Transverse colon (tissue), 4 donors: ENCODE measurements at regions of chr16 and their contacts with region 1.

Region 1: DNA sequence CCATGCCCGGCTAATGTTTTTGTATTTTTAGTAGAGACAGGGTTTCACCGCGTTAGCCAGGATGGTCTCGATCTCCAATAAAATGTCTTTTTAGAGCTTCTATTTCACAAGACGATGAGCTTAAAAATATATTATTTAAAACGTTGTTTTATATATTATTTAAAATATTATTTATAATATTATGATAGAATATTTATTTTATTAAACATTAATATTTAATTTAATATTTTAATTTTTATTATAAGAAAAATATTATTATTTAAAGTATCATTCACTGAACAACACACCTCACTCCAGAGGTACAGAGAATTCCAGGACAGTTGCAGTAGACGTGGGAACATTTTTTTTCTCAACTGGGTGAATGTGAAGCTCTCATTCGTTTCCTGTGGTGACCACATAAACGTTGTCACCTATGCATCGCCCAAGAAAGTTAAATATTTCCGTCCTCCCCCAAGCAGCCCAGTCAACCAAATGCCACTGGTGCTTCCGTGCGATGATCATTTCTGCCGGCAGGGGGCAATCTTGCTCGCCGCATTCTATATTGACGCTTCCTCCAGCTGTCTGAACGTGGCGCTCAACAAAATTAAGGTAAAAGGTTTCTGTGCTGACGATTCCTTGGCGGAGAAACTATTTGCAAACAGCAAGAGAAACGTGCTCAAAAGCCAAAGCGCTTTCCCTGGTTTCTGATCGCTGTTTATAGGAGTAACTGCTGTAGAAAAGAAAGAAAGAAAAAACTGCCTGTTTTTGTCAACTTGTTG is 41.7 kb upstream of the PRSS54 start:
- DNase-seq: peak; percentile 87
- H3K4me3 ChIP-seq: peak overlapping the region in 2 of 4 donors; percentile 6 to 41
- H3K27ac ChIP-seq: no peak overlapping the region
- H3K4me1 ChIP-seq: peaks cover 0 to 5% (median 2%) of the 10 kb centered on the region in 4 donors
- H3K27me3 ChIP-seq: peaks cover 10% of the 10 kb centered on the region
- CTCF ChIP-seq: peak; percentile 87 to 93 (median 92)
- EP300 ChIP-seq: no peak
- POLR2A ChIP-seq: no peak

Region 2: GRCh38 chr16:58129097-58129936 is 207.2 kb before region 1 on chr16 and contains the start of gene CFAP20:
- in situ Hi-C with region 1: no loop called
- intact Hi-C with region 1: no loop called
- DNase-seq: peak; percentile 99
- H3K4me3 ChIP-seq: peak within 1 kb of the TSS; percentile 62 to 86 (median 84)
- H3K27ac ChIP-seq: peak within 1 kb of the TSS; percentile 90 to 96 (median 92)
- H3K4me1 ChIP-seq: peaks cover 25 to 39% (median 27%) of the 10 kb centered on the region in 4 donors
- H3K27me3 ChIP-seq: no peaks in the 10 kb centered on the region
- CTCF ChIP-seq: no peak
- EP300 ChIP-seq: no peak
- POLR2A ChIP-seq: peak; percentile 94
- total RNA-seq, gene CFAP20: 6.6 to 26.5 (median 21.4) TPM

Region 3: GRCh38 chr16:58481931-58482330 is 145.4 kb after region 1 on chr16:
- in situ Hi-C with region 1: loop called in 3 of 4 experiments (anchors 5 to 10 kb)
- intact Hi-C with region 1: no loop called
- DNase-seq: no peak
- H3K4me3 ChIP-seq: no peak overlapping the region
- H3K27ac ChIP-seq: no peak overlapping the region
- H3K4me1 ChIP-seq: no peaks in the 10 kb centered on the region
- H3K27me3 ChIP-seq: no peaks in the 10 kb centered on the region
- CTCF ChIP-seq: no peak
- EP300 ChIP-seq: no peak
- POLR2A ChIP-seq: no peak

Region 4: DNA sequence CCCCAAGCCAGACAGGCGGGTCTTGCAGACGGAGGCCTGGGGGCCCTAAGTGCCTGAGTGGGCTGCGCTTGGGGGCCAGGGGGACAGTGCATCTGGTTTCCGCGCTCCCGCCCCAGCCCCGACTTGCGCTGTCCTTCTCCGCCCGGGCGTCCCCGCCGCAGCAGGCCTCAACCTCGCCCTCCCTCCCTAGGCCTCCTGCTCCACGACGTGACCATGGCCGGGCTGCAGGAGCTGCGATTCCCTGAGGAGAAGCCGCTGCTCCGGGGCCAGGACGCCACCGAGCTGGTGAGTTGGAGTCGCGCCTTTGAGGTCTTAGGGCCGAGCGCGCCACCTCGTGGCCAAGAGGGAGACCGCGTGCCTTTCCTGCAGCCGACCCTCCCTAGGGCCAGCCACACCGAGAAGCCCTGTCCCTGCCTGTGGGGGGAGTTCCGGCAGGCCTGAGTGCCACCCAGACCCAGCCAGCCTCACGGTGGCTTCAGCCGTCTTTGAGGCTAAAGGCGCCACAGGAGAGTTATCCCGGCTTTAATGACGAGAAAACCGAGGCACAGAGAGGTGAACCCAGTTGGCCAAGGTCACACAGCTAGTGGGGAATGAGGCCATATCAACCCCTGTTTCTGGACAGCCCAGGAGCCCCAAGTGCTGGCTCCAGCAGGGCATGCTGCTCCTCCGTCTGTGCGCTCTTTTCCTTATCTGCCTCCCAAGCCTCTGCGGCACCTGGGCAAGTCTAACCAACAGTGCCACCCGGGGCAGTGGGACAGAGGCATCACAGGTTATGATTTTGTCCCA is 151.2 kb after region 1 on chr16:
- in situ Hi-C with region 1: loop called in 3 of 4 experiments (anchors 5 to 10 kb)
- intact Hi-C with region 1: loop called (anchors 2 kb)
- DNase-seq: peak; percentile 79
- H3K4me3 ChIP-seq: no peak overlapping the region
- H3K27ac ChIP-seq: no peak overlapping the region
- H3K4me1 ChIP-seq: peaks cover 0 to 6% (median 4%) of the 10 kb centered on the region in 4 donors
- H3K27me3 ChIP-seq: no peaks in the 10 kb centered on the region
- CTCF ChIP-seq: peak; percentile 77 to 96 (median 91)
- EP300 ChIP-seq: no peak
- POLR2A ChIP-seq: no peak

Region 5: DNA sequence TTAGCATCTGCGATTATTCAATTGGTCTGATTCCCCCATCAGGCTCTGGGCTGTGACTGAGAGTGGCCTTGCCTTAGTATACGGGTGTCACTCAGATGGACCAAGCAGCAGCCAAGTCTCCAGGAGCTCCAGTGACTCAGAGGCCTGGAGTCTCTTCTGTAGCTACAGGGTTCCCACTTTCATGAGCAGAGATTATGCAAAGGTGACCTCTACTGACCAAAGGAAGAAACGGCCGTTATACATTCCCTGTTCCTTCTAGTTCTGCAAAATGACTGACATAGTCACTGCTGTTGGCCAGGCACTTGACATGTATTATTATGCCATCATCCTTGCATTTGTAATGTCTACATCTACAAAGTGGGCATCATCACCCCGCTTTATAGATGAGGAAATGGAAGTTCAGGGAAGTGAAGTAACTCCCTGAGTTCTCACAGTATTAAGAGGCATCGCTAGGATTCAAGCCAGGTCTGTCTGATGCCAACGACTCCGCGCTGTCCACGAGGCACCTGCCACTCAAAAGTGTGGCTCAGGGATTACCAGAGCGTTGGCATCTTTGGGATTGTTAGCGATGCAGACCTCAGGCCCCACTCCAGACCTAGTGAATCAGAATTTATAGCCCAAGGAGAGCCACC is 324.8 kb after region 1 on chr16:
- in situ Hi-C with region 1: loop called in 2 of 4 experiments (anchors 25 kb)
- intact Hi-C with region 1: no loop called
- DNase-seq: peak; percentile 38
- H3K4me3 ChIP-seq: no peak overlapping the region
- H3K27ac ChIP-seq: no peak overlapping the region
- H3K4me1 ChIP-seq: peaks cover 0 to 5% (median 2%) of the 10 kb centered on the region in 4 donors
- H3K27me3 ChIP-seq: no peaks in the 10 kb centered on the region
- CTCF ChIP-seq: peak; percentile 38 to 50 (median 41)
- EP300 ChIP-seq: no peak
- POLR2A ChIP-seq: no peak

Region 6: DNA sequence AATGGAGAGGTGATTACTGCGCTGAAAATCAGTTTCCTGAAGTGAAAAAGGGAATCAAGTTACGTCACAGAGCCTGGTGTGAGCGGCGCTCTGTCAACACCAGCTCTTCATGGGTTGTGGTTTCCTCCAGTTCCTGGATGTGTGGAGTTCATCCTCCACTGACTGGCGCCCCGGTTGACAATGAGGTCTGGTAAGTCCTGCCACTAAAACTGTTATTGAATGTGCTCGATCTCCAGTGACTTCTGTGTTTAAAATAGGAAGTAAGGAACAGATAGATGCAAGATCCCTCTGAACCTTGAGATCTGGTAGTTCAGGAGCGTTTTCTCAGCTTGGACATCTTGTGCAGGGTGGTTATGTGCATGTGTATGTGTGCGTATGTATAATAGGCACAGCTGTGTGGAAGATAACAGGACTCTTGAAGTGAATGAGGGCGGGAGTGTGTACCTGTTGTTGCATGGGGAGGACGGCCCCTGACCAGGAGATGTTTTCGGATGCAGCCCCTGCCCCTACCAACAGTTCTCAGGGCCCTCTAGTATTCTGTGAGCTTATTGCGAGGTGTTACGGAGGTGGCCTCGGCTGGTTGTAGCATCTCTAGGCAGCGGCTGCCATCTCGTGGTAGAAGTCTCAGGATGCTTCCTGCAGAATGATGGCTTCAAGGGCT is 419.6 kb after region 1 on chr16:
- in situ Hi-C with region 1: loop called in 2 of 4 experiments (anchors 10 to 25 kb)
- intact Hi-C with region 1: no loop called
- DNase-seq: peak; percentile 76
- H3K4me3 ChIP-seq: no peak overlapping the region
- H3K27ac ChIP-seq: no peak overlapping the region
- H3K4me1 ChIP-seq: peaks cover 0 to 3% (median 0%) of the 10 kb centered on the region in 4 donors
- H3K27me3 ChIP-seq: no peaks in the 10 kb centered on the region
- CTCF ChIP-seq: peak; percentile 52 to 66 (median 63)
- EP300 ChIP-seq: no peak
- POLR2A ChIP-seq: no peak